Activated CD4-positive, alpha-beta memory T cell treated with anti-CD3 and anti-CD28 coated beads for 36 hours (primary cell): ENCODE measurements at regions of chr1 and their contacts with region 1.

Region 1: DNA sequence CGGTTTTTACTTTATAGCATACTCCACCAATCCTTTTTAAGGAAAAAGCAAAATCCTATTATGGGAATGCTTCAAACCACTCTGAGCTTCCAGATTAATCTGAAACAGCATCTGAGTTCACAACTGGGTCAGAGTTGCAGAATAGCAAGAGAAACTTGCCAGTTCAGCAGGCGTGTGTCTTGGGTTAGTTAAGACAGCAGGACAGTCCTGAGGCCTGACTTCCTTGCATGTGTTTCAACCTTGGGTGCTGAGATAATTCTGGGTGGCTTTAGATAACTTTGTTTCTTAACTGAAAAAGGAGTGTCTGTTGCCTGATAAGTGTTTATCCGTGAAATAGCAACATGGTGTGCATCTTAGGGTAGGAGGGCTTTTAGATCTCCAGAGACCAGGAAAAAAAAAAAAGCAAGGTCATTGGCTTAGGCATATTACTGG is 169.2 kb downstream of the DHRS3 start:
- DNase-seq: no peak
- H3K4me3 Mint-ChIP-seq: no peak overlapping the region
- H3K27ac Mint-ChIP-seq: peak overlapping the region; percentile 88
- H3K4me1 Mint-ChIP-seq: peaks cover 65% of the 10 kb centered on the region
- H3K27me3 Mint-ChIP-seq: peaks cover 11% of the 10 kb centered on the region

Region 2: GRCh38 chr1:12124693-12125421 is 323.9 kb before region 1 on chr1:
- CTCF ChIA-PET with region 1: no interaction called
- POLR2A ChIA-PET with region 1: no interaction called
- intact Hi-C with region 1: no loop called
- DNase-seq: peak; percentile 86
- H3K4me3 Mint-ChIP-seq: no peak overlapping the region
- H3K27ac Mint-ChIP-seq: peak overlapping the region; percentile 42
- H3K4me1 Mint-ChIP-seq: peaks cover 52% of the 10 kb centered on the region
- H3K27me3 Mint-ChIP-seq: no peaks in the 10 kb centered on the region

Region 3: DNA sequence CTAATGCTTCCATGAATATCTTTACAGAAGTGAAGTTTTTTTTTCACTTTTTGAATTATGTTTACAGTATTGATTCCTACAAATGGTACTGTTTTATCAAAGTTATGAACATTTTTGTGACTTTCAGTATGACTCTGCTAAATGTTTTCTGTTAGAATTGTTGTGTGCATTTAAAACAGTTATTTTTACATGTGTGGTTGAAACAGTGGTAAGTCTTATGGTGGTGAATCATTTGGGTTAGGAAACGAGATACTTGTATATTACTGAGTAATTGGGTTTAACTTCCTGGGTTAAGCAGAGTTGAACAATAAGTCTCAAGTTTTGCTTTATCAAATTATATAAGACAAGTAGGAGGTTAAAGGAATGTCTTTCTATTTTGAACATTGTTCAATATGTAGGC is 152.1 kb before region 1 on chr1:
- CTCF ChIA-PET with region 1: no interaction called
- POLR2A ChIA-PET with region 1: no interaction called
- intact Hi-C with region 1: loop called (anchors 1 kb)
- DNase-seq: no peak
- H3K4me3 Mint-ChIP-seq: no peak overlapping the region
- H3K27ac Mint-ChIP-seq: no peak overlapping the region
- H3K4me1 Mint-ChIP-seq: peaks cover 24% of the 10 kb centered on the region
- H3K27me3 Mint-ChIP-seq: no peaks in the 10 kb centered on the region

Region 4: DNA sequence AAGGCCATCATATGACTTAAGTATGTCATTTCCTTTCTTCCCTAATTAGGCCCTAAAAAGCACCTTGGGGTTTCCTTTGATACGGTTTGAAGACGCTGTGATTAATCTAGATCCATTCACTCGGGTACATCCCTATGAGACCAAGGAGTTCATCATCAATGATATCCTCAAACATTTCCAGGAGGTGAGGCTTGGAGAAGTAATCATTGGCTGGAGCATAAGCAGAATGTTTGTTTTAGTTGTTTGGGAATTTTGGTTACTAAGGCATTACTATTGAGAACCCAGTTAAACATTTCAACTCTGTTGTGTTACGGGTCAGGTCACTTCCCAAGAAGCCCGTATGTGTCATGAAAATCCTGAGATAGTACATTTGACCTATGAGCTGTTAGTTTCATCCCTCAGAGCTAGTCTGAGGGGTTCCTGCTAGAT is 33.7 kb before region 1 on chr1:
- CTCF ChIA-PET with region 1: interaction called, 3 read pairs
- POLR2A ChIA-PET with region 1: no interaction called
- intact Hi-C with region 1: loop called (anchors 1 kb)
- DNase-seq: no peak
- H3K4me3 Mint-ChIP-seq: no peak overlapping the region
- H3K27ac Mint-ChIP-seq: peak overlapping the region; percentile 57
- H3K4me1 Mint-ChIP-seq: peaks cover 21% of the 10 kb centered on the region
- H3K27me3 Mint-ChIP-seq: no peaks in the 10 kb centered on the region

Region 5: DNA sequence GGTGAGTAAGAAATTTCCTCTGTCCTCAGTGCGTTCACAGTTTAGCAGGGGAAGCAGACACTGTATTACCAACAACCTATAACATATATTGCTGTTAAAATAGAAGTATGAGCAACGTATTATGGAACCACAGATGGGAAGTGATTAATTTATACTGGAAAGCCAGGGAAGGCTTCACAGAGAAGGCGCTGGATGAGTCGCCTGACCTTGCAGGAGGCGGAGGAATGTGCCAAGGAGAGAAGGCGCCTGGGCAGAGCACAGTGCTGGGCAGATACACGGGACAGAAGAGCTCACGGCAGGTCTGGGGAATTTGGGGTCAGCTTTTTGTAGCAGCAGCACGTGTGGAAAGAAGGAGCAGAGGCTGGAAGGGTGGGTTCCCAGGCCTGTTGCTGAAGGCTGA is 52.9 kb after region 1 on chr1:
- CTCF ChIA-PET with region 1: no interaction called
- POLR2A ChIA-PET with region 1: interaction called, 8 read pairs
- intact Hi-C with region 1: loop called (anchors 1 kb)
- DNase-seq: peak; percentile 25
- H3K4me3 Mint-ChIP-seq: no peak overlapping the region
- H3K27ac Mint-ChIP-seq: peak overlapping the region; percentile 87
- H3K4me1 Mint-ChIP-seq: peaks cover 36% of the 10 kb centered on the region
- H3K27me3 Mint-ChIP-seq: no peaks in the 10 kb centered on the region

Region 6: GRCh38 chr1:12518931-12519692 is 70.3 kb after region 1 on chr1:
- CTCF ChIA-PET with region 1: no interaction called
- POLR2A ChIA-PET with region 1: interaction called, 3 read pairs
- intact Hi-C with region 1: loop called (anchors 1 kb)
- DNase-seq: peak; percentile 80
- H3K4me3 Mint-ChIP-seq: no peak overlapping the region
- H3K27ac Mint-ChIP-seq: peak overlapping the region; percentile 45
- H3K4me1 Mint-ChIP-seq: peaks cover 28% of the 10 kb centered on the region
- H3K27me3 Mint-ChIP-seq: no peaks in the 10 kb centered on the region